ENCODE measurements at regions of chr3 and their contacts with region 1.

Region 1: DNA sequence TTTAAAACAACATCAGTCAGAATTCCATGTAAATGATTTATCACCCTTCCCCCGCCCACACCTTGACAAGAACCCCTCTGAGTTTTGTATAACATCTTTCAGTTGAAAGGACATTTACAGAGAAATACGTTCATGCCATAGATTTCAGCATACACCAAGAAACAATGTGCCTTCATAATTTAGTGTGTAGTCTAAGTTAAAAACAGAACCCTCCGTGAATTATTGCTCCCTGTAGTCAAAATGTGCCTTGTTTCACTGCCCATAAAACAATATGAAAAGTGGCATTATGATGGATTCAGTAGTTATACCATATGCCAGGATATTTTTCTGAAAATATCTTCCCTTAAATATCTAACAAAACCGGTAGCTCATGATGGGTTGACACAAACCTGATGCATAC is 953.9 kb downstream of the GBE1 start:
- DNase-seq: no peak
- ATAC-seq: no peak
- H3K4me3 ChIP-seq: no peak overlapping the region
- H3K27ac ChIP-seq: no peak overlapping the region
- H3K4me1 ChIP-seq: no peaks in the 10 kb centered on the region
- H3K27me3 ChIP-seq: no peaks in the 10 kb centered on the region
- CTCF ChIP-seq: no peak

Region 2: DNA sequence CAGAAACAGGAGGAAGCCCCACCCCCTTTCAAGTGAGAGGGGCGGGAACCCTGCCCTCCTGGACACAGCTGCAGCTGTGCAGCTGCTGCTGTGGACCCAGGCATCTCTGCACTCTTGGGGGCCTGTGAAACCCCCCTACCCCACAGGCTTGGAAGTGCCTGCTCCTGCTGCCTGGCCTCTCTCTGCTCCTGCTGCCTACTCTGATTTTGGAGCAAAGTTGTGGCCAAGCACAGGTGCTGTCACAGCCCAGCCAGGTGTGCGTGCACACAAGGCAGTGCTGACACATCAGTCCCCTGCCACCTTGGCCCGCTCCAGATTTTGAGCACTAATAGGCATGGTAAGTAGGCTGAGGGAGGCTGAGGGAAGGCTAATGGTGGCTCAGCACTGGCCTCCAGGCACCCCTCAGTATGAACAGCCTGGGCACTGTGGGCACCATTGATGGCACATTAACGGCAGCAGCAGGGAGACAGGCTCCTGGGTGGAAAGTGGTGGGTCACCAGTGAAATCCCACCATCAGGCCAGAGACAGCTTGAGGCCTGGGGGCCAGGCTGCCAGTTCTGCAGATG is 63.0 kb after region 1 on chr3:
- CTCF ChIA-PET with region 1: no interaction called
- POLR2A ChIA-PET with region 1: no interaction called
- intact Hi-C with region 1: no loop called
- DNase-seq: no peak
- ATAC-seq: no peak
- H3K4me3 ChIP-seq: no peak overlapping the region
- H3K27ac ChIP-seq: no peak overlapping the region
- H3K4me1 ChIP-seq: no peaks in the 10 kb centered on the region
- H3K27me3 ChIP-seq: no peaks in the 10 kb centered on the region
- CTCF ChIP-seq: no peak

Region 3: GRCh38 chr3:81027344-81027743 is 219.8 kb after region 1 on chr3:
- CTCF ChIA-PET with region 1: no interaction called
- POLR2A ChIA-PET with region 1: no interaction called
- intact Hi-C with region 1: no loop called
- DNase-seq: no peak
- ATAC-seq: no peak
- H3K4me3 ChIP-seq: no peak overlapping the region
- H3K27ac ChIP-seq: no peak overlapping the region
- H3K4me1 ChIP-seq: no peaks in the 10 kb centered on the region
- H3K27me3 ChIP-seq: no peaks in the 10 kb centered on the region
- CTCF ChIP-seq: no peak

Region 4: GRCh38 chr3:81086348-81086747 is 278.8 kb after region 1 on chr3:
- CTCF ChIA-PET with region 1: no interaction called
- POLR2A ChIA-PET with region 1: no interaction called
- intact Hi-C with region 1: loop called (anchors 5 kb)
- DNase-seq: no peak
- ATAC-seq: no peak
- H3K4me3 ChIP-seq: no peak overlapping the region
- H3K27ac ChIP-seq: no peak overlapping the region
- H3K4me1 ChIP-seq: no peaks in the 10 kb centered on the region
- H3K27me3 ChIP-seq: no peaks in the 10 kb centered on the region
- CTCF ChIP-seq: no peak

Region 5: GRCh38 chr3:81338676-81339555 is 531.3 kb after region 1 on chr3:
- CTCF ChIA-PET with region 1: no interaction called
- POLR2A ChIA-PET with region 1: no interaction called
- intact Hi-C with region 1: no loop called
- DNase-seq: peak; percentile 88
- ATAC-seq: peak; percentile 85
- H3K4me3 ChIP-seq: peak overlapping the region; percentile 8; the same call in 1 of the 2 replicates
- H3K27ac ChIP-seq: peak overlapping the region; percentile 3
- H3K4me1 ChIP-seq: peaks cover 24% of the 10 kb centered on the region
- H3K27me3 ChIP-seq: no peaks in the 10 kb centered on the region
- CTCF ChIP-seq: peak; percentile 92

Measured in PC-3 (cell line).